Activated CD4-positive, alpha-beta memory T cell treated with anti-CD3 and anti-CD28 coated beads, Interleukin-2, amount 10 ng/mL, durations not matched to agents 7 days and 5 days (primary cell): ENCODE measurements at regions of chrX and their contacts with region 1.

Region 1: GRCh38 chrX:63754860-63755582 is 30.0 kb downstream of the ARHGEF9 start:
- DNase-seq: peak; percentile 91
- H3K4me3 Mint-ChIP-seq: peak overlapping the region; percentile 100
- H3K27ac Mint-ChIP-seq: peak overlapping the region; percentile 97
- H3K4me1 Mint-ChIP-seq: peaks cover 49% of the 10 kb centered on the region
- H3K27me3 Mint-ChIP-seq: no peaks in the 10 kb centered on the region

Region 2: DNA sequence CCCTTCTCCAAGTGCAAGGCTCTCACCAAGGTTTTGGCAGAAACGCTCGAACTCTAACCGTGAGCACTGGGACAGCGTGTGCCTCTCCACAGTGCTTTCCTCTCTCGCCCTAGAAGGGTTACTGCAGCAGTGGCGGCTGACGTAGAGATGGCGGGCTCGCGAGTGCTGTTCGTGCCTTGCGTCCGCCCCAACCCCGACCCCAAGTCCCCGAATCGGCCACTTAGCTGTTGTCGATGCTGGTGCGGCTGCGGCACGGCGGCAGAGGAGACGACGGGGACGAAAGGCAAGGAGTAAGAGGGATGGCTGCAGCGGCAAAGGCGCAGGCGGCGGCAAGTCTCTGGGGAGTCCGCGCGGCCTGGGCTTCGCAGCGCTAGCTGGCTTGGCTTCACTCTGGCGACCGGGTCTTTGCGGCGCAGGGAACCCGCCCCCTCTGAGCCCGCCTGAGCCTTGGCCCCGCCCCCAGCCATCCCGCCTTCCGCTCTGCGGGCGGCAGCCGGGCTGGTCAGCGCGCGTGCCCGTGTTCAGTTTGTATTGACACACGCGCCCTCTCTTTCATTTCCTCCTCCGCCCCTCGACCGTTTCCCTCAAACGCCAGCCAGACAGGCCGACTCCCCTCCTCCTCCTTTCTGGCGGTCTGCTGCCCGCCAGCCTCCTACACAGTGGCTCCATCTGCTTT is 403.9 kb before region 1 on chrX and contains the start of gene SPIN4:
- CTCF ChIA-PET with region 1: no interaction called
- POLR2A ChIA-PET with region 1: interaction called, 16 read pairs
- DNase-seq: peak; percentile 78
- H3K4me3 Mint-ChIP-seq: peak within 1 kb of the TSS; percentile 94
- H3K27ac Mint-ChIP-seq: peak within 1 kb of the TSS; percentile 81
- H3K4me1 Mint-ChIP-seq: peaks cover 23% of the 10 kb centered on the region
- H3K27me3 Mint-ChIP-seq: no peaks in the 10 kb centered on the region
- total RNA-seq, gene SPIN4: 10.5 to 10.7 TPM

Region 3: DNA sequence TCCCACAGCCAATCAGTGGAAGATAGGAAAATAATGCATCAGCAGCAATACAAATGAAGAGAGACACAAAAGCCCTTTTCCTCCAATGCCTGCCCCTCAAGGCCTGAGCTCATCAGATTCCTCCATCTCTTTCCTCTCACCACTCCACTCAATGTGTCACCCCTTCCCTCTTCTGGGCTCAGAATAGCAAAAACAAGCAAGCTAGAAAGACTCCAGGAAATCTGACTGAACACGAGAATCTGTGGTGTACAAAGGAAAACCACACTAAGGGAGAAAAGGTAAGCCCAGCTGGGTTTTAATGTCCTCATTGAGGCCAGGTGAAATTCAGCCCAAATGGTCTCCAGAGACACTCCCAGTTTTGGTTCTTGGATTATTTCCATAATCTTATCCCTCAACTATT is 16.3 kb before region 1 on chrX:
- CTCF ChIA-PET with region 1: no interaction called
- POLR2A ChIA-PET with region 1: interaction called, 12 read pairs
- DNase-seq: no peak
- H3K4me3 Mint-ChIP-seq: no peak overlapping the region
- H3K27ac Mint-ChIP-seq: no peak overlapping the region
- H3K4me1 Mint-ChIP-seq: peaks cover 59% of the 10 kb centered on the region
- H3K27me3 Mint-ChIP-seq: no peaks in the 10 kb centered on the region